T-cell (primary cell): ENCODE measurements at regions of chr18 and their contacts with region 1.

Region 1: DNA sequence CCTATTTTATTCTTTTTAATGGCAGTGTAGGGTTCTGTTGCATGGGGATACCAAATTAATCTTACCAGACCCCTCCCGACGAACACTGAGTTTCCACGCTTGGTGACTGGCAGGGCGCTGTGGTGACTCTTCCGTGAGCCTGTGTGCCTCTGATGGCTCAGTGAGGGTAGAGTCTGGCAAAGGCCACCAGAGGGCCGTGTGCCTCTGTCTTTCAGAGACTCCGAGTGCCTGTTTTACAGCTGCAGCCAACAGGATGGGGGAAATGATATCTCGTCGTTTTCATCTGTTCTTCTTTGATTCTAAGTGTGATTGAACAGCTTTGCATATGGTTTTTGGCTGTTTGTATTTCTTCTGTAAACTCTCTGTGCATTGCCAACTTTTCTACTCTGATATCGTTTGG is 99.8 kb downstream of the ZNF236 start:
- DNase-seq: peak; percentile 21 to 73 (median 48)
- ATAC-seq: peak; percentile 95 to 100 (median 100)
- H3K4me3 ChIP-seq: no peak overlapping the region
- H3K4me3 Mint-ChIP-seq: no peak overlapping the region
- H3K27ac ChIP-seq: no peak overlapping the region
- H3K27ac Mint-ChIP-seq: peak overlapping the region; percentile 39 to 46
- H3K4me1 ChIP-seq: no peaks in the 10 kb centered on the region
- H3K4me1 Mint-ChIP-seq: peaks cover 8 to 13% (median 13%) of the 10 kb centered on the region in 3 donors
- H3K27me3 ChIP-seq: no peaks in the 10 kb centered on the region
- H3K27me3 Mint-ChIP-seq: no peaks in the 10 kb centered on the region

Region 2: DNA sequence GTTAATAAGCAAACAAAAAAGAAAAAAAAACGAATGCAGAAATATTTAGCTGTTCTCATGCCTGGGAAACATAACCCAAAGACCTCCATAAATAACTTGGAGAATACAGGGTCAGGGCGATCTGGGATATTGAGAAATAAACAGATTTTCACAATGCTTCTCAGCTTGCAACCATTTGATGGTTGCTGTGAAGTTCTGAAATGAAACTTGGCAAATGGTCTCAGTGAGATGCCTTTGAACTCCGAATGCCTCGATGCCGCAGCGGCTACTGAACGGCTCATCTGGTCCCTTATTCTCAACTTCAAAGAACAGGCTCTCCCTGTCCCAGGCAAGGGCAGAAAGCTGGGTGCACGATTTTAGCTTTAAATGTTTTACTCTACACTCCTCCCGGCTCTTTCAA is 505.2 kb before region 1 on chr18:
- CTCF ChIA-PET with region 1: no interaction called
- POLR2A ChIA-PET with region 1: interaction called in 1 of 2 experiments, 10 read pairs
- DNase-seq: no peak
- ATAC-seq: no peak
- H3K4me3 ChIP-seq: no peak overlapping the region
- H3K4me3 Mint-ChIP-seq: no peak overlapping the region
- H3K27ac ChIP-seq: no peak overlapping the region
- H3K27ac Mint-ChIP-seq: no peak overlapping the region
- H3K4me1 ChIP-seq: no peaks in the 10 kb centered on the region
- H3K4me1 Mint-ChIP-seq: peaks cover 23 to 34% (median 24%) of the 10 kb centered on the region in 3 donors
- H3K27me3 ChIP-seq: peaks cover 0 to 8% of the 10 kb centered on the region in 2 experiments
- H3K27me3 Mint-ChIP-seq: no peaks in the 10 kb centered on the region

Region 3: GRCh38 chr18:76878426-76878825 is 43.7 kb before region 1 on chr18:
- CTCF ChIA-PET with region 1: no interaction called
- POLR2A ChIA-PET with region 1: no interaction called
- DNase-seq: no peak
- ATAC-seq: no peak
- H3K4me3 ChIP-seq: no peak overlapping the region
- H3K4me3 Mint-ChIP-seq: no peak overlapping the region
- H3K27ac ChIP-seq: no peak overlapping the region
- H3K27ac Mint-ChIP-seq: no peak overlapping the region
- H3K4me1 ChIP-seq: peaks cover 0 to 2% of the 10 kb centered on the region in 2 experiments
- H3K4me1 Mint-ChIP-seq: peaks cover 0 to 14% (median 10%) of the 10 kb centered on the region in 3 donors
- H3K27me3 ChIP-seq: no peaks in the 10 kb centered on the region
- H3K27me3 Mint-ChIP-seq: no peaks in the 10 kb centered on the region

Region 4: GRCh38 chr18:77470569-77471413 is 548.7 kb after region 1 on chr18:
- CTCF ChIA-PET with region 1: interaction called in 1 of 2 experiments, 10 read pairs
- POLR2A ChIA-PET with region 1: no interaction called
- DNase-seq: no peak
- ATAC-seq: no peak
- H3K4me3 ChIP-seq: no peak overlapping the region
- H3K4me3 Mint-ChIP-seq: no peak overlapping the region
- H3K27ac ChIP-seq: no peak overlapping the region
- H3K27ac Mint-ChIP-seq: no peak overlapping the region
- H3K4me1 ChIP-seq: no peaks in the 10 kb centered on the region
- H3K4me1 Mint-ChIP-seq: no peaks in the 10 kb centered on the region
- H3K27me3 ChIP-seq: peaks cover 0 to 6% of the 10 kb centered on the region in 2 experiments
- H3K27me3 Mint-ChIP-seq: peaks cover 26 to 29% of the 10 kb centered on the region in 2 donors